GM10248 (cell line): ENCODE measurements at regions of chr2 and their contacts with region 1.

Region 1: DNA sequence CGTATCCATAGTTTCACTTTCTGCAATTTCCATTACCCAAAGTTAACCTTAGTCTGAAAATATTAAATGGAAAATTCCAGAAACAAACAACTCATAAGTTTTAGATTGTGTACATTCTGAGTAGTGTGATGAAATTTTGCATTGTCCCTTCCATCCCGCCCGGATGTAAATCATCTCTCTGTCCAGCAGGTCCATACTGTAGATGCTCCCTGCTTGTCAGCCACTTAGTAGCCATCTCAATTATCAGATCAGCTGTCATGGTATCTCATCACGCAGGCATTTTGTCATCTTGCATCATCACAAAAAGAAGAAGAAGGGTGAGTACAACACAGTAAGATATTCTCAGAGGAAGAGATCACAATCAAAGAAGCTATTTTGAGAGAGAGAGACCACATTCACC is 185.0 kb upstream of the STK17B start:
- DNase-seq: no peak
- CTCF ChIP-seq: no peak

Region 2: DNA sequence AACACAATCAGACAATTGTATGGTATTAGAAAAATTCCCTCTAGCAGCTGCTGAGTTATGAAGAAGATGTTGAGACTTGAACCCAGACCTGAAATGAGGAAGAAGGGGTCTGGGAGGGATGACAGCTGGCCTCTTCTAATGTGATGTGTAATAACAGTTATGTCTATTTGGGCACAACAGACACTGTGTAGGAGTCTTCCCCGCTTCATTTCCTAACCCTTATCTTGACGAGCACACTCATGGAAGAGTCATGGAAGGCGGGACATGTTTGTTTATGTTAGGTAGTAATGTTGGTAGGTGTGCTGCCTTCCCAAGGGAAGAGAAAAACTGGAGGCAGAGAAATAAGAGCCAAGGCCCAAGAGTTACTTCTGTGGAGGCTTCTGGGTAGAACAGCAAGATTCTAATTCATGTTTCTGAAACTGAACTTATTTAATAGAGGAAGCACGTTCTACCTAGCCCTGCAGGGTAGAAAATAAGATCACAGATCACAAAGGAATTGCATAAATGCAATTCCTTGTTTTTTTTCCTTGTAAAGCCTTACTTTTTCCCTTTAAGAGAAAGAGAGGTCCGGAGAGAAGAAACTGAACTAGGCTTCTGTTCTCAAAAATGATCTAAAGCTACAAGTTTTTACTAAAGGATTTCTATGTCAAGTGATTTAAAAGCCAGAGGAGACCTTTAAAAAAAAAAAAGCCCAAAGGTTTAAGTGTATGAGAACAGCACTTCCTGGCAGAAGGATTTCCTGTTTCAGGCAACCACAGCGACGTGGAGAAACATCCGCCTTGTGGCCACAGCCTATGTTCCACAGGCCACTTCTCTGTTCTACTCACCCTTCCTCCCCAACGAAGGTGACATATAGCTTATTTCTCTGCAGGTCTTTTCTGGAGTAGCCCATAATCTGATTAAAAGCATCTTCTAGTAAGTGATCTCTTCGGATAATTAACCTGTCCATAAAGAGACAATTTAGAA is 116.4 kb before region 1 on chr2:
- CTCF ChIA-PET with region 1: no interaction called
- POLR2A ChIA-PET with region 1: no interaction called
- DNase-seq: peak; percentile 61
- CTCF ChIP-seq: no peak

Region 3: GRCh38 chr2:196259507-196260481 is 96.5 kb before region 1 on chr2:
- CTCF ChIA-PET with region 1: no interaction called
- POLR2A ChIA-PET with region 1: no interaction called
- DNase-seq: no peak
- CTCF ChIP-seq: no peak

Region 4: GRCh38 chr2:196337208-196337953 is 19.0 kb before region 1 on chr2:
- CTCF ChIA-PET with region 1: interaction called, 26 read pairs
- POLR2A ChIA-PET with region 1: no interaction called
- DNase-seq: no peak
- CTCF ChIP-seq: no peak

Region 5: DNA sequence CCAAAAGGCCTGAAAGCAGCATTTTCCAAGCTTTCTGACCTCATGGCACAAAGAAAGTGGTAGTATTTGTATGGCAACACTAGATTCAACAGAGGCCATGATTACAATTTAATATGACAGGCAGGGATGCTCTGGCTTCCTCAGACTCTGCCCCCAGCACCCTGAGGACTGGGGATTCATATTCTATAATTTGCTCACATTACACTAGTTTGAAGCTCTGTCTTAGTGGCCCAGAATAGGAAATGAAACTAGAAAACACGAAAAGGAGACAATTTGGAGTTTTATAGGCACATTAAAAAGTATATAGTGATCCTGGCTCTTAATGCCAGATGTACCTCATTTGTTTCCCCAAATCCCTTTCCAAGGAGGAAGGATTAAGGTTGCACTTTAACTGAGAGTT is 11.9 kb before region 1 on chr2:
- CTCF ChIA-PET with region 1: interaction called, 16 read pairs
- POLR2A ChIA-PET with region 1: no interaction called
- DNase-seq: no peak
- CTCF ChIP-seq: no peak

Region 6: DNA sequence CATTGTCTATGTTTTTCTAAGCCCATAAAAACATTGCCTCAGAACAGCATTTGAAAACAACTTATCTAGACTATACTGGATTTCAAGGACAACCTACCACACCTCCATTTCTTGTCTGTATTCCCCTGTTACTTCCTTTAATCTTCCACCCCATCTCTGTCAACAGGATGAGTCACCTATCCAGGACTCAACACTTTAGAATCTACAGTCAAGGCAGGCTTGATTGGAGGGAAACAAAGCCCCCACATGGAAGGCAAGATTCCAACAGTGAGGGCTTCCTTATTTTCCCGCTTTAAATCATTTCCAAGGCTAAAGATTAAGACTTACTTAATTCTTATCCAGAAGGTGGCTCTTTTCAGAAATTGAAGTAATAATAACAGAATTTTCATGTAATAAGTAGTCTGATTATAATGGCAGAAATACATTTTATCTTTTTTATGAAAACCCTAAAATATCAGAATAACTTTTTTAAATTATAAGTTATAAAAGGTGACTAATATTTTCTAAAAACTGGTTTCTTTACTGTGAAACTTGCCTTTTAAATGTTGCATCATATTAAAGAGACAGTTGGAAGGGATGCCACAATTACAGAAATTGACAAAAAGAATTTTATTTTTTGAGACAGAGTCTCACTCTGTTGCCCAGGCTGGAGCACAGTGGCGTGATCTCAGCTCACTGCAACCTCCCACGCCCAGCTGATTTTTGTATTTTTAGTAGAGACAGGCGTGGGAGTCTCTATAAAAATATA is 144.5 kb after region 1 on chr2:
- CTCF ChIA-PET with region 1: no interaction called
- POLR2A ChIA-PET with region 1: no interaction called
- DNase-seq: no peak
- CTCF ChIP-seq: no peak